ENCODE measurements at regions of chr3 and their contacts with region 1.

Region 1: DNA sequence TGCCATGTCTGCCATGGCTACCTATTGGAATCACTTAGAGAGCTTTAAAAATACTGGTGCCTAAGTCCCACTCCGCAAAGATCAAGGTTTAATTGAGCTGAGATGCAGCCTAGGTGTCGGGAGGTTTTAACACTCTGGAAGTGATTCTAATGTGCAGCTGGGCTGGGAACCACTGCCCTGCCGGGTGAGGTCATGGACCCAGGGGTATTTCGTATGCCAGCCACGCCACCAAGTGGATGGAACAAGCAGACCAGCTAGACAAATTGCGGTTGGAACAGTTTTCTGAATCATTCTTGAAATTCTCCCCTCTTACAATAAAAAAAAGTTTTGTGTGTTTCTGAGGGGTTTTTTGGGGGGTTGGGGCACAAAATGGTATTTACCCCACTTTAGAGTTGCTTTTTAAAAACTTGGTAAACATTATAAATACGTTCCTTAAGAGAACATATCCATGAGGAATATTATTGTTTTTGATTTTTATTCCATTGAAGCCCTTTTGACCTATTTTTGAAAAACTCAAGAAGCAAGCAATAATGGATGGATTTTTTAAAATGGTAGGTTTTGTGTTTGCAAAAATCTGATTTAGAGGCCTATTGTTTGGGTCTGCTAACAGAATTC is 66.2 kb upstream of the CSTA start:
- DNase-seq: peak in 1 of 9 donors; percentile 68
- ATAC-seq: peak; percentile 69
- H3K4me3 ChIP-seq: no peak overlapping the region
- H3K4me3 Mint-ChIP-seq: no peak overlapping the region
- H3K27ac ChIP-seq: no peak overlapping the region
- H3K27ac Mint-ChIP-seq: no peak overlapping the region
- H3K4me1 ChIP-seq: no peaks in the 10 kb centered on the region
- H3K4me1 Mint-ChIP-seq: peaks cover 0 to 14% (median 0%) of the 10 kb centered on the region in 7 donors
- H3K27me3 ChIP-seq: no peaks in the 10 kb centered on the region
- H3K27me3 Mint-ChIP-seq: peaks cover 12 to 26% (median 14%) of the 10 kb centered on the region in 5 donors

Region 2: GRCh38 chr3:121894301-121894990 is 364.4 kb before region 1 on chr3 and contains the start of gene SLC15A2:
- CTCF ChIA-PET with region 1: no interaction called
- POLR2A ChIA-PET with region 1: no interaction called
- intact Hi-C with region 1: loop called in 1 of 2 experiments (anchors 10 kb)
- DNase-seq: no peak
- ATAC-seq: no peak
- H3K4me3 ChIP-seq: no peak within 1 kb of the TSS
- H3K4me3 Mint-ChIP-seq: no peak within 1 kb of the TSS
- H3K27ac ChIP-seq: no peak within 1 kb of the TSS
- H3K27ac Mint-ChIP-seq: no peak within 1 kb of the TSS
- H3K4me1 ChIP-seq: no peaks in the 10 kb centered on the region
- H3K4me1 Mint-ChIP-seq: peaks cover 0 to 1% (median 0%) of the 10 kb centered on the region in 7 donors
- H3K27me3 ChIP-seq: no peaks in the 10 kb centered on the region
- H3K27me3 Mint-ChIP-seq: no peaks in the 10 kb centered on the region
- total RNA-seq, gene SLC15A2: 1.6 to 6.8 (median 3.8) TPM

Region 3: GRCh38 chr3:122283796-122284445 is 25.1 kb after region 1 on chr3:
- CTCF ChIA-PET with region 1: no interaction called
- POLR2A ChIA-PET with region 1: no interaction called
- intact Hi-C with region 1: no loop called
- DNase-seq: no peak
- ATAC-seq: no peak
- H3K4me3 ChIP-seq: no peak overlapping the region
- H3K4me3 Mint-ChIP-seq: no peak overlapping the region
- H3K27ac ChIP-seq: no peak overlapping the region
- H3K27ac Mint-ChIP-seq: no peak overlapping the region
- H3K4me1 ChIP-seq: no peaks in the 10 kb centered on the region
- H3K4me1 Mint-ChIP-seq: peaks cover 0 to 1% (median under 1%) of the 10 kb centered on the region in 7 donors
- H3K27me3 ChIP-seq: no peaks in the 10 kb centered on the region
- H3K27me3 Mint-ChIP-seq: peaks cover 0 to 26% (median 0%) of the 10 kb centered on the region in 5 donors

Measured in naive thymus-derived CD4-positive, alpha-beta T cell (primary cell).